Activated CD8-positive, alpha-beta T cell treated with anti-CD3 and anti-CD28 coated beads for 36 hours (primary cell): ENCODE measurements at regions of chr10 and their contacts with region 1.

Region 1: GRCh38 chr10:28241741-28242399 is 61.0 kb downstream of the MPP7 start:
- DNase-seq: peak; percentile 65
- ATAC-seq: peak; percentile 83
- H3K4me3 Mint-ChIP-seq: no peak overlapping the region
- H3K27ac Mint-ChIP-seq: no peak overlapping the region
- H3K4me1 Mint-ChIP-seq: peaks cover 27% of the 10 kb centered on the region
- H3K27me3 Mint-ChIP-seq: no peaks in the 10 kb centered on the region
- CTCF ChIP-seq: peak; percentile 93

Region 2: DNA sequence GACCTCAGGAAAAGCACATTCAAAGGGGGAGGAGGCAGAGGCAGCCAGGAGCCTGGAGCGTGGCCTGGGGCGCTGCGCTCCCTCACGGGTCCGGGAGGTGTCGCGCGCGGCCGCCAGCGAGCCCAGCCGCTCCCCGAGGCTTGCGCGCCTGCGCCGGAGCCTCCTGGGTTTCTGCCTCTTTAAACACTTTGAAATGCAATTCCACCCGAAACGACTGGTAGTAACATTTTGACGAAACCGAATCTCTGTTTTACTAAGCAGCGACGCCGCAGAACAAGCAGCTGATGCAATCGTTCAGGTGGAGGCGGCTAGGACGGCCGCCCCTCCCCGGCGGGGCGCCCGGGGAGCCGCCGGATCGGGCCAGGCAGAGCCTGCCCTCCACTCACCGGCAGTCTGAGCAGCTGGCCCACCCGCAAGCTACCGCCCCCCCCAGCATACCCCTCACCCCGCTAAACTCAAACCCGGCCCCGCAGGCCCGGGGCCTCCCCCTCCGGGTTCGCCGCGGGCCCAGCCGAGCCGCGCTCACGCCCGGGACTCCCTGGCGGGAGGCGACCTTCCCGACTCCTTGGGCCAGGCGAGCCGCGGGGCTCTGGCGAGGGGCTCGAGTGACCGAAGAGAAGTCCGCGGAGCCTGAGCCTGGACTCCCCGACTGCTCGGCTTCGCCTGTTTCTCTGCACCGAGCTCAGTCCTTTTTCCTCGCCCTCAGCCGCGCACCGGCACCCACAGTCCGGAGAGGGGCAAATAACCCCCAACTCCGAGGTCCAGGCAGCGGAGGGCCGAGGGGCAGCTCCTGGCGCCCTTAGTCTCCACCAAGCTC is 499.5 kb before region 1 on chr10:
- CTCF ChIA-PET with region 1: interaction called, 25 read pairs
- POLR2A ChIA-PET with region 1: interaction called, 3 read pairs
- intact Hi-C with region 1: loop called (anchors 10 kb)
- DNase-seq: peak; percentile 90
- ATAC-seq: peak; percentile 86
- H3K4me3 Mint-ChIP-seq: peak overlapping the region; percentile 78
- H3K27ac Mint-ChIP-seq: peak overlapping the region; percentile 71
- H3K4me1 Mint-ChIP-seq: peaks cover 36% of the 10 kb centered on the region
- H3K27me3 Mint-ChIP-seq: peaks cover 59% of the 10 kb centered on the region
- CTCF ChIP-seq: peak; percentile 86

Region 3: DNA sequence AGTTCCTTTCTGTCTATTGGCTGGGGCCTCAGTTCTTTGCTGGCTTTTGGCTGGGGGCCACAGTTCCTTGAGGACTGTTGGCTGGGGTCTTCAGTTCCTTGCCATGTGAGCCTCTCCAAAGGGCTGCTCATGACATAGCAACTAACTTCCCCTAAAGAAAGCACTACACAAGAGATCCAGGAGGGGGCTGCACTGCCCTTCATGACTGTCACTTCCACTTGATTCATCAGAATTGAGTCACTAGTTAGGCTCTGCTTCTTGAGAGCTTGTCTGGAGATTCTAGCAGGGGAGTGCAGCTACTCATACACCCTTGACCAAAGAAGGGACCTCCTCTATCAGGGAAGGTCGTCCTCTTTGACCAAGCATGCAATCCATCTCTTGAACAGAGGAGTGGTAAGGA is 458.2 kb before region 1 on chr10:
- CTCF ChIA-PET with region 1: interaction called, 9 read pairs
- POLR2A ChIA-PET with region 1: no interaction called
- intact Hi-C with region 1: loop called (anchors 10 kb)
- DNase-seq: peak; percentile 71
- ATAC-seq: peak; percentile 95
- H3K4me3 Mint-ChIP-seq: no peak overlapping the region
- H3K27ac Mint-ChIP-seq: no peak overlapping the region
- H3K4me1 Mint-ChIP-seq: no peaks in the 10 kb centered on the region
- H3K27me3 Mint-ChIP-seq: peaks cover 16% of the 10 kb centered on the region
- CTCF ChIP-seq: peak; percentile 46

Region 4: GRCh38 chr10:28219251-28219650 is 22.6 kb before region 1 on chr10:
- CTCF ChIA-PET with region 1: interaction called, 23 read pairs
- POLR2A ChIA-PET with region 1: interaction called, 4 read pairs
- intact Hi-C with region 1: no loop called
- DNase-seq: no peak
- ATAC-seq: no peak
- H3K4me3 Mint-ChIP-seq: no peak overlapping the region
- H3K27ac Mint-ChIP-seq: no peak overlapping the region
- H3K4me1 Mint-ChIP-seq: peaks cover 30% of the 10 kb centered on the region
- H3K27me3 Mint-ChIP-seq: no peaks in the 10 kb centered on the region
- CTCF ChIP-seq: no peak

Region 5: DNA sequence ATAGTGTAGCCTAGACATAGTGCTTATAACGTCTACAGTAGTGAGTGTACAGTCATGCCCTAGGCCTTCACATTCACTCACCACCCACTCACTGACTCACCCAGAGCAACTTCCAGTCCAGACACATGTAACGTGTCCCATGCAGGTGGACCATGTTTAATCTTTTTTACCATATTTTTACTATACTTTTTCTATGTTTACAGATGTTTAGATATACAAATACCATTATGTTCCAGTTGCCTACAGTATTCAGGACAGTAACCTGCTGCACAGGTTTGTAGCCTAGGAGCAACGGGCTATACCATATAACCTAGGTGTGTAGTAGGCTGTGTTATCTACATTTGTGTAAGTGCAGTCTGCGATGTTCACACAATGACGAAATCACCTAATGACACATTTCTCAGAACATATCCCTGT is 50.0 kb after region 1 on chr10:
- CTCF ChIA-PET with region 1: interaction called, 11 read pairs
- POLR2A ChIA-PET with region 1: interaction called, 3 read pairs
- intact Hi-C with region 1: no loop called
- DNase-seq: peak; percentile 82
- ATAC-seq: peak; percentile 99
- H3K4me3 Mint-ChIP-seq: no peak overlapping the region
- H3K27ac Mint-ChIP-seq: peak overlapping the region; percentile 75
- H3K4me1 Mint-ChIP-seq: peaks cover 56% of the 10 kb centered on the region
- H3K27me3 Mint-ChIP-seq: no peaks in the 10 kb centered on the region
- CTCF ChIP-seq: no peak

Region 6: DNA sequence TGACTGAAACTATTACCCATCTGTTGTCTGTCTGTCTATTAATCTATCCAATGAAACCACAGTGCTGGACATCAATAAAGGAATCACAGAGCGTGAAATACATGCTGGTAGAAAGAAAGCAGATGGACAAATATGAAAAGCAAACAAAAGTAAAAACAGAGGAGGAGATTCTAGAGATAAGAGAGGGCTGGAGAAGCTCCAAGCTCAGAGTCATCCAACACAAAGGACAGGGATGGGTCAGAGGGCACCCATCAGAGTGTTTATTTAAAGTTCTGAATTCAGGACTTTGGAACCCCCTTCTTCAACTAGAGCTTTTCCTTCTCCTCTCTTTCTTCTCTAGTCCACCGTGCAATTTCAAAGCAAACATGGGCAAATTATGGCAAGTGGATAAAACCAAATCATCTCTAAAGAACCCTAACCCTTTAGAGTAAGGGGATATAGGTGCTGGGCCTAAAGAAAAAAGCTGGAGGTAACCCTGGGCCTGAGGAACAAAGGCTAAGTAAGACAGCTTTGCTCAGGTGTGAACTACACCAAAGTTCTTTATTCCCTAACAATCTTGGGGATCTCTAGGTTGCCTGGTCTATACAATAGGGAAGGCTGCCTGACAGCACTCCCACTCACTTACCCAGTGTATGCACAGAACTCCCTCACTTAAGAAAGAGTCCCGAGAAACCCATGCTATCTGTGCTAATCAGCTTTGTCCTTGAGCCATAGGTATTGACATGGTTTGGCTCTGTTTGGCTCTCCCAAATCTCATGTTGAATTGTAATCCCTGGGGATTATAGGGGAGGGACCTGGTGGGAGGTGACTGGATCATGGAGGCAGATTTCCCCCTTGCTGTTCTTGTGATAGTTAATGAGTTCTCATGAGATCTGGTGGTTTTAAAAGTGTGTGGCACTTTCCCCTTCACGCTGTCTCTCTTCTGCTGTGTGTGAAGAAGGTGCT is 532.5 kb after region 1 on chr10:
- CTCF ChIA-PET with region 1: no interaction called
- POLR2A ChIA-PET with region 1: no interaction called
- intact Hi-C with region 1: no loop called
- DNase-seq: no peak
- ATAC-seq: no peak
- H3K4me3 Mint-ChIP-seq: no peak overlapping the region
- H3K27ac Mint-ChIP-seq: no peak overlapping the region
- H3K4me1 Mint-ChIP-seq: peaks cover 3% of the 10 kb centered on the region
- H3K27me3 Mint-ChIP-seq: peaks cover 2% of the 10 kb centered on the region
- CTCF ChIP-seq: no peak